Activated CD4-positive, alpha-beta T cell treated with anti-CD3 and anti-CD28 coated beads, Interleukin-2, amount 10 ng/mL, durations not matched to agents 24 days and 14 days (primary cell): ENCODE measurements at regions of chr19 and their contacts with region 1.

Region 1: DNA sequence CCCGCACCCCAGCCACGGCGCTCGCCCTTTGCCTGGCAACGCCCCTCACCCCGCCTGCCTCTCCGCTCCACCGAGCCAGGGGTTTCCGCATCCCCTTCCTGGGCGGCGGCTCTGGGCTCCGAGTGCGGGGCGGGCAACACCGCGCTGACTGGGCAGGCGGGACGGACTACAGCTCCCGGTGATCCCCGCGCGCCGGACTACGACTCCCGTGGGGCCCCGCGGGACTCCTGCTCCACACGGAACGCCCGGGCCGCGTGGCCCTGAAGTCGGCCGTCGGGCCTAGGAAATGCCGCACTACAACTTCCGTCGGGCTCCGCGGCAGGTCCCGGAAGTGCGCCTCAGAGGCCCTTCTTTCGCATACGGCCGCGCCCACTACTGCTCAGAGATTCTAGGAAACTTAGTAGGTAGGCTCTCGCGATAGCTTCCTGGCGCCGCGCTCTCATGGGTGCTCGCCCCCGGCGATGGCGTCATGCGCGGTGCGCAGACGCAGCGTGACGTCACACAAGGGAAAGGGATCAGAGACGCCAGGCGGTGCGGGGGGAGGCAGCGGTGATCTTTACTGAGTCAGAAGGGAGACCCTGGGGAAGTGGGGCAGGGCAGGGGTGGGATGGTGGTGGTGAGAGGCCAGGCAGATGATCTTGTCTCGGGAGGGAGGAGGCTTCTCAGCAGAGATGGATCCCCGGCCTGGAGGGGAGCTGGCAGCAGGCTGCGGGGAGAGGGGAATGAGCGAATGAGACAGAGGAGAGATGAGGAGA is at the start of gene JOSD2:
- DNase-seq: peak; percentile 99
- H3K4me3 Mint-ChIP-seq: peak within 1 kb of the TSS; percentile 97
- H3K27ac Mint-ChIP-seq: peak within 1 kb of the TSS; percentile 95
- H3K4me1 Mint-ChIP-seq: peaks cover 21% of the 10 kb centered on the region
- H3K27me3 Mint-ChIP-seq: peaks cover 4% of the 10 kb centered on the region
- total RNA-seq, gene JOSD2: 41.7 and 44.0 TPM in 2 replicates

Region 2: DNA sequence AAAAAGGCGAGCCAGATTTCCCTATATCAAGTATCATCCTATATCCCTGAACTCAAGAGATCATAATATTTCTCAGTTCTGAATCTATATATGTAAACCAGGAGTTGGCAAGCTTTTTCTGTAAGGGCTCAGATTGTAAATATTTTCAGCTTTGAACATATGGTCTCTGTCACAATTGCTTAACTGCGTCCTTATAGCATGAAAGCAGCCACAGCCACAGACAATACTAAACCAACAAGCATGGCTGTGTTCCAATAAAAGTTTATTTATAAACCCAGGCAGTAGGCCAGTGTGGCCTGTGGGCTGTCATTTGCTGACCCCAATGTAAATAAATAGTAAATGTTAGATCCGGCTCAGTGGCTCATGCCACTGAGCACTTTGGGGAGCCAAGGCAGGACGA is 320.0 kb before region 1 on chr19:
- intact Hi-C with region 1: no loop called
- DNase-seq: no peak
- H3K4me3 Mint-ChIP-seq: no peak overlapping the region
- H3K27ac Mint-ChIP-seq: no peak overlapping the region
- H3K4me1 Mint-ChIP-seq: no peaks in the 10 kb centered on the region
- H3K27me3 Mint-ChIP-seq: no peaks in the 10 kb centered on the region

Region 3: DNA sequence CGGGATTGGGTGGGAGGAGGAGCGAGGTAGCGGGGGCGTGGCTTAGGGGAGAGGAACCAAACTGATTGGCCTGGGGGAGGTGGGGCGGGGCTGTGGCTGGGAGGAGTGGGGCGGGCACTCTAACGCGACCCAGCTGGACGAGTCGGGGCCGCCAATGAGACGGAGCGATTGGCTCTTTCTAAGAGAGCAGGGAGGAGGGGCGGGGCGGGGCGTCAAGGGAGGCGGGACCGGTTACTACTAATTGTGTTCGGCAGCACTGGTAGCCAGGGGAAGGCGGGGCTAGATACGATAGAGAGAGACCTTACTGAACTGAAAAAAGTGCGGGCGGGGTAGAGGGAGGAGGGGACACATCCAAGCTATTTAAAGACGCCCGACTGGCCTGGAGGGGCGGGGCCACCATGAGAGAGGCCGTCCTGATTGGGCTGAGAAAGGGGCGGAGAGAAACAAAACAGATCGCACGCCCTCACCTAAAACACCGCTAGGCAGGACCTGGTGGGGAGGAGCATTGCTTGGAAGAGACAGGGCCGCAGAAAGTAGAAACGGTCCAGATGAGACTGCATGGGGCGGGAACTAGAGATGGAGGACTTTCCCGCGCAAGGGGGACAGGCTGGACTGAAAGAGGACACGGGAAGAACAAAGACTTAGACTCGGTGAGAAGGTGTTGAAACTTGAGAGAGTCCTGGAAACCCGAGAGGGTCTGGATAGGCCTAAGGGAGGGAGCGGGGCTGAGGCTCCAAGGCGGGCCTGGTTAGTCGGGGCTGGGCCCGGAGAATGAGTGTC is 181.9 kb before region 1 on chr19 and contains the start of gene KCNC3:
- intact Hi-C with region 1: loop called (anchors 1 kb)
- DNase-seq: peak; percentile 98
- H3K4me3 Mint-ChIP-seq: peak within 1 kb of the TSS; percentile 89
- H3K27ac Mint-ChIP-seq: peak within 1 kb of the TSS; percentile 92
- H3K4me1 Mint-ChIP-seq: peaks cover 73% of the 10 kb centered on the region
- H3K27me3 Mint-ChIP-seq: peaks cover 20% of the 10 kb centered on the region
- total RNA-seq, gene KCNC3: 20.3 TPM in 2 replicates

Region 4: GRCh38 chr19:50357178-50358100 is 153.8 kb before region 1 on chr19:
- intact Hi-C with region 1: no loop called
- DNase-seq: peak; percentile 96
- H3K4me3 Mint-ChIP-seq: peak overlapping the region; percentile 90
- H3K27ac Mint-ChIP-seq: peak overlapping the region; percentile 95
- H3K4me1 Mint-ChIP-seq: peaks cover 47% of the 10 kb centered on the region
- H3K27me3 Mint-ChIP-seq: no peaks in the 10 kb centered on the region

Region 5: GRCh38 chr19:50383852-50384684 is 127.2 kb before region 1 on chr19 and contains the start of gene POLD1:
- intact Hi-C with region 1: loop called (anchors 1 kb)
- DNase-seq: peak; percentile 100
- H3K4me3 Mint-ChIP-seq: peak within 1 kb of the TSS; percentile 93
- H3K27ac Mint-ChIP-seq: peak within 1 kb of the TSS; percentile 90
- H3K4me1 Mint-ChIP-seq: peaks cover 27% of the 10 kb centered on the region
- H3K27me3 Mint-ChIP-seq: no peaks in the 10 kb centered on the region
- total RNA-seq, gene POLD1: 188 and 204 TPM in 2 replicates

Region 6: GRCh38 chr19:50476224-50476942 is 34.9 kb before region 1 on chr19 and contains the starts of genes EMC10 and GARIN5A:
- intact Hi-C with region 1: loop called (anchors 1 kb)
- DNase-seq: peak; percentile 98
- H3K4me3 Mint-ChIP-seq: peak within 1 kb of the TSS; percentile 100
- H3K27ac Mint-ChIP-seq: peak within 1 kb of the TSS; percentile 93
- H3K4me1 Mint-ChIP-seq: peaks cover 21% of the 10 kb centered on the region
- H3K27me3 Mint-ChIP-seq: no peaks in the 10 kb centered on the region
- total RNA-seq, gene EMC10: 79.2 and 81.6 TPM in 2 replicates
- total RNA-seq, gene GARIN5A: 0.21 and 0.68 TPM in 2 replicates

Region 7: DNA sequence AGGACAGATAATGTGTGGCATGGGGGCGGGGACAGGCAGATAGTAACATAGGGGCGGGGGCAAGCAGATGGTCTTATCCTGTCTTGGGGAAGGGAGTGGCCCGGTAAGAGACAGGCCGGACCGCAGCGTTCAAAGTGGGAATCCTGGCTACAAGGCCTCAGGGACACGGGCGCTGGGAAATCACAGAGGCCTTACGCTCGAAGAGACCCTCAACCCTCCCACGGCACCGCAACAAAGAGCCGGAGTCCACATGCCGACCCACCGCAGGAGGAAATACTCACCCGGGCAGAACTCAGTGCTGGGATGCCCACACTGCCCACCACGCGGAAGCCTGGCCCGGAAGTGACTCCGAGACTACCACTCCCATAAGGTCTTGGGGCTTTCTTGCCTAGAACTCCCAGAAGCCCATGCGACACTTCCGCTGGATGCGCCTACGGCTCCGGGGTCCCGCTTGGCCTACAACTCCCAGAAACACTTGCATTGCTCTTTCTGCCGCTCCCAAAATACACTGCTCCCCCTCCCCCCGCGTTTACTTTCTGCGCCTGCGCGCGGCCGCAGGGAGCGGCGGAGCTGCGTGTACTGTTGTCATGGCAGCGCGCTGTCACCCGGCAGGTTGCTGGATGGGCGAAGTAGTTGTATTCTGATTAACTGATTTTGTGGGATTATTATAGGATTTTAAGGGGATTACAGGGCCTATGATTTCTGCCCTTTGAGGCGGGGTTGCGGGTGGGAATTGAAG is 597.0 kb after region 1 on chr19 and contains the start of gene CTU1:
- intact Hi-C with region 1: loop called (anchors 1 kb)
- DNase-seq: peak; percentile 99
- H3K4me3 Mint-ChIP-seq: peak within 1 kb of the TSS; percentile 87
- H3K27ac Mint-ChIP-seq: peak within 1 kb of the TSS; percentile 93
- H3K4me1 Mint-ChIP-seq: peaks cover 24% of the 10 kb centered on the region
- H3K27me3 Mint-ChIP-seq: no peaks in the 10 kb centered on the region
- total RNA-seq, gene CTU1: 12.8 and 13.4 TPM in 2 replicates